ENCODE measurements at regions of chr10 and their contacts with region 1.

Region 1: DNA sequence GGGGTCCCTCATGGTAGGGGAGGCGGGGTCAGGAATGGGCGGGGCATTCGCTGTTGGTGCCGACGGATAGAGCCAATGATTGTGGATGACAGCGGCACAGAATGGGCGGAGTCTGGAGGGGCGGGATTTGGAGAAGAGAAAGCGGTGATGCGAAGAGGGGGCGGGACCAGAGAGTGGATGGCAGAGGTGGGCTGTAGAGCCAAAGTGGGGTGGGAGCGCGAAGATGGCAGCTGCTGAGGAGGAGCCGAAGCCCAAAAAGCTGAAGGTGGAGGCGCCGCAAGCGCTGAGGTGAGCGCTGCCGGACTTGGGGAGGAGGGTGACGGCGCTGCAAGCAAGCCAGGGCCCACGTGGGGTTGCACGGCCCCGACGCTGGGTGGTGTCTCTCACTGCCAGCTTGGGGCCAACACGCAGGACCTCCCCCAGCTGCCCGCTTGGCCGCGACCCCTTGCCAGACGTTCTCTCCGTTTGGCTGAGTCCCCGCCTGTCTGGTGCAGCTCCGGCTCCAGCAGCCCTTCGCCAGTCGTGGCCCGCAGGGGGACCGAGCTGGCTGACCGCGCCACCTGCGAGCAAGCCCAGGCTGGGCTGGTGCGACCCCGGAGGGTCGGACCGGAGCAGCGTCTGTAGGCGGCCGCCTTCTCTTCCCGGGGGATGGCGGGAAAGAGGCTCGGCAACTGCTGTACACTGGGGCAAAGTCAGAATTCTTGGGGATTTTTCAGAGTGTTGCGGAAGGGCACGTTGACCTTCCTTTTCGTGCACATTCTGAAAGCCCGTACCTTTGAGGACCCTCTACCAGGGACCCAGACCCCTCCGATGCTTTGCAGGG is at the start of gene ADK:
- DNase-seq: peak; percentile 100
- ATAC-seq: peak; percentile 97
- H3K4me3 Mint-ChIP-seq: no peak within 1 kb of the TSS
- H3K27ac Mint-ChIP-seq: peak within 1 kb of the TSS; percentile 85
- H3K4me1 Mint-ChIP-seq: peaks cover 45% of the 10 kb centered on the region
- H3K27me3 Mint-ChIP-seq: no peaks in the 10 kb centered on the region
- total RNA-seq, gene ADK: 53.7 to 55.0 TPM

Region 2: DNA sequence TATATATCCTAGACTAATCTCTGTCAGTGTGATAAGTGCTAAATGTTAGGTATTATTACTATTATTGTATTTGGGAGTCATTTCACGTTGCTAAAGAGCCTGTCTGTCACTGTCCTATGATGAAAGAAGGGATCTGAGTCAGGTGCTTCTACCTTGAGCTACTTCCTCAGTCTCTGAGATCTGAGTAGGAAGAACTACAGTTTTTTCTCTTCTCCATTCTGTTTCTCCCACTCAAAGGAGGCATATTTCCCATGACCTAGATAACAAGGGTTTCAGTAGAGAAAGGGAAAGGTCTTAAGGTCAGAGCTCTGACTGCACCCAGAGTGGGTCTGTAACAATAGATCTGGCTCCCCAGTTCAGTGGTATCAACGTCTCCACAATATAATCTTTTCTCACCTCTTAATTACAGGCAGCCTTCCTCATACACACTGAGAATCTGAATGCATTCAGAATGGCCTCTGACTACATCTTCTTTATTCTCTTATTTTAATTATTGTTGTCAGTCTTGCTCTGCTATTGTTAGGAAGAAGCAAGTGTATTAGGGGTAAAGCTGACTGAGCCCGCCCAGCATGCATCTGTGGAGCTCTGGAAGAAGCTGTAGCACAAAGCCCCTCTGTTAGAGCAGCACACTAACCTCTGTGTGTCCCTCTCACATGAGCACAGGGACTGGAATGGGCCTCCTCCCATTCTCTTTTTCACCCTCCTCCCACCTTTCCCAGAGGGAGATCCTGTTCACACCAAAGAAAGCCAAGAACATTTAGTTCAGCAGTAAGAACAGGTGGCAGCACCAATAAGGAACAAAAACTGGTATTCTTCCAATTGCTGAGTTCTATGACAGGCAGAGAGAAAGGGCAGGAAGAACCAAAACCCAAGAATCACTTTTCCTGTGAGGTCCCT is 598.2 kb before region 1 on chr10:
- CTCF ChIA-PET with region 1: no interaction called
- POLR2A ChIA-PET with region 1: no interaction called
- intact Hi-C with region 1: no loop called
- DNase-seq: no peak
- ATAC-seq: no peak
- H3K4me3 Mint-ChIP-seq: no peak overlapping the region
- H3K27ac Mint-ChIP-seq: no peak overlapping the region
- H3K4me1 Mint-ChIP-seq: no peaks in the 10 kb centered on the region
- H3K27me3 Mint-ChIP-seq: no peaks in the 10 kb centered on the region

Region 3: GRCh38 chr10:73785221-73785720 is 366.0 kb before region 1 on chr10 and contains the start of gene ZSWIM8:
- CTCF ChIA-PET with region 1: no interaction called
- POLR2A ChIA-PET with region 1: no interaction called
- intact Hi-C with region 1: loop called in 1 of 2 experiments (anchors 1 kb)
- DNase-seq: peak; percentile 90
- ATAC-seq: peak; percentile 85
- H3K4me3 Mint-ChIP-seq: peak within 1 kb of the TSS; percentile 83
- H3K27ac Mint-ChIP-seq: peak within 1 kb of the TSS; percentile 98
- H3K4me1 Mint-ChIP-seq: peaks cover 46% of the 10 kb centered on the region
- H3K27me3 Mint-ChIP-seq: no peaks in the 10 kb centered on the region
- total RNA-seq, gene ZSWIM8: 40.1 to 67.3 TPM

Region 4: GRCh38 chr10:73997787-73998622 is 153.3 kb before region 1 on chr10 and contains the start of gene VCL:
- CTCF ChIA-PET with region 1: no interaction called
- POLR2A ChIA-PET with region 1: no interaction called
- intact Hi-C with region 1: loop called in 1 of 2 experiments (anchors 1 kb)
- DNase-seq: peak; percentile 97
- ATAC-seq: peak; percentile 98
- H3K4me3 Mint-ChIP-seq: peak within 1 kb of the TSS; percentile 89
- H3K27ac Mint-ChIP-seq: peak within 1 kb of the TSS; percentile 97
- H3K4me1 Mint-ChIP-seq: peaks cover 39% of the 10 kb centered on the region
- H3K27me3 Mint-ChIP-seq: no peaks in the 10 kb centered on the region
- total RNA-seq, gene VCL: 20.7 to 22.7 TPM

Region 5: GRCh38 chr10:74096777-74097176 is 54.5 kb before region 1 on chr10:
- CTCF ChIA-PET with region 1: no interaction called
- POLR2A ChIA-PET with region 1: no interaction called
- intact Hi-C with region 1: no loop called
- DNase-seq: no peak
- ATAC-seq: no peak
- H3K4me3 Mint-ChIP-seq: no peak overlapping the region
- H3K27ac Mint-ChIP-seq: no peak overlapping the region
- H3K4me1 Mint-ChIP-seq: no peaks in the 10 kb centered on the region
- H3K27me3 Mint-ChIP-seq: no peaks in the 10 kb centered on the region

Region 6: GRCh38 chr10:74139981-74140380 is 11.3 kb before region 1 on chr10:
- CTCF ChIA-PET with region 1: no interaction called
- POLR2A ChIA-PET with region 1: no interaction called
- intact Hi-C with region 1: no loop called
- DNase-seq: no peak
- ATAC-seq: no peak
- H3K4me3 Mint-ChIP-seq: no peak overlapping the region
- H3K27ac Mint-ChIP-seq: no peak overlapping the region
- H3K4me1 Mint-ChIP-seq: peaks cover 3% of the 10 kb centered on the region
- H3K27me3 Mint-ChIP-seq: no peaks in the 10 kb centered on the region

Region 7: GRCh38 chr10:74213571-74214162 is 62.4 kb after region 1 on chr10:
- CTCF ChIA-PET with region 1: no interaction called
- POLR2A ChIA-PET with region 1: no interaction called
- intact Hi-C with region 1: loop called in 1 of 2 experiments (anchors 1 kb)
- DNase-seq: peak; percentile 66
- ATAC-seq: peak; percentile 58
- H3K4me3 Mint-ChIP-seq: no peak overlapping the region
- H3K27ac Mint-ChIP-seq: no peak overlapping the region
- H3K4me1 Mint-ChIP-seq: peaks cover 4% of the 10 kb centered on the region
- H3K27me3 Mint-ChIP-seq: no peaks in the 10 kb centered on the region

Region 8: GRCh38 chr10:75210282-75211006 is 1059.2 kb after region 1 on chr10 and contains the start of gene VDAC2:
- CTCF ChIA-PET with region 1: no interaction called
- POLR2A ChIA-PET with region 1: no interaction called
- intact Hi-C with region 1: loop called in 1 of 2 experiments (anchors 1 kb)
- DNase-seq: peak; percentile 96
- ATAC-seq: peak; percentile 83
- H3K4me3 Mint-ChIP-seq: peak within 1 kb of the TSS; percentile 89
- H3K27ac Mint-ChIP-seq: peak within 1 kb of the TSS; percentile 100
- H3K4me1 Mint-ChIP-seq: peaks cover 40% of the 10 kb centered on the region
- H3K27me3 Mint-ChIP-seq: no peaks in the 10 kb centered on the region
- total RNA-seq, gene VDAC2: 122 to 233 TPM

Measured in activated CD4-positive, alpha-beta T cell treated with anti-CD3 and anti-CD28 coated beads for 36 hours (primary cell).